ENCODE measurements at regions of chr9 and their contacts with region 1.

Region 1: DNA sequence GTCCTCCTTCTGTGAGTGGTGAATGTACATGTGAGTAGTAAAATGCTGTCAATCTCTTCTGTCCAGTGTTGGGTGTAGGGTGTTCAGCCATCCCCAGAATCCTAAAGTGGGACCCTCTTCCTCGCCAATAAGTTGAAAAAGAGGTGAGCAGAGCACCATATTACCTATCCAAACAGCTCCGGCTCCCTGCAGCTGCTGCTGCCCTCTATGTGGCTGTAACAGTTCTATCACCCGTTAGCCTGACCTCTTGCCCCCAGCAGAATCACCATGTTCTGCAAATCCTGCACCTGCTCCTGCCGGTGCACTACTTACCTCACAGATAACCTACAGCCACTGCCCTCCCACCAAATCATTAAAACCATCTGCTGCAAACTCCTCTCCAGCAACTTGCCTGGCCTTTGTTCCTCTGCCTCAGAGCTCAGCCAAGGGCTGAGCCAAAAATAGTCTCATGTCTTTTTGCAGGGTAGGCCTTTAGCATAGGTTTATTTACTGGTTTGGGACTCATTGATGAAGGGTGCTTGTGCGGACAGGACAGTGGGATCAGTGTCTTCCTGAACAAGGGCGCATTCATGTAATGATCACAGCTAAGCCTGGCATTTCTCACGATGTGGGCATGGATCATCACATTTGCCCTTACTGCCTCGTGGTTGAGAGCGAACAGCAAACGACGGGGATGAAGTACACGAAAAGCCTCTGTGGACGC is 49.6 kb upstream of the CCL21 start:
- DNase-seq: no peak
- ATAC-seq: no peak
- H3K4me3 ChIP-seq: no peak overlapping the region
- H3K27ac ChIP-seq: no peak overlapping the region
- H3K4me1 ChIP-seq: peaks cover 0 to 5% of the 10 kb centered on the region in 2 experiments; a peak in 1 of 4 replicates
- H3K27me3 ChIP-seq: no peaks in the 10 kb centered on the region
- CTCF ChIP-seq: no peak
- POLR2A ChIP-seq: no peak
- RAD21 ChIP-seq: no peak

Region 2: GRCh38 chr9:34744295-34745221 is 15.0 kb before region 1 on chr9:
- CTCF ChIA-PET with region 1: interaction called, 16 read pairs
- POLR2A ChIA-PET with region 1: interaction called, 4 read pairs
- RAD21 ChIA-PET with region 1: interaction called in 1 of 2 experiments, 5 read pairs
- intact Hi-C with region 1: no loop called
- DNase-seq: peak; percentile 35
- ATAC-seq: peak; percentile 91
- H3K4me3 ChIP-seq: 0 out of 4 replicates have a peak overlapping the region, but pooled peaks of 1 of the 2 experiments have one; percentile 11
- H3K27ac ChIP-seq: no peak overlapping the region
- H3K4me1 ChIP-seq: peaks cover 12 to 19% of the 10 kb centered on the region in 2 experiments
- H3K27me3 ChIP-seq: no peaks in the 10 kb centered on the region
- CTCF ChIP-seq: no peak
- POLR2A ChIP-seq: no peak
- RAD21 ChIP-seq: no peak

Region 3: DNA sequence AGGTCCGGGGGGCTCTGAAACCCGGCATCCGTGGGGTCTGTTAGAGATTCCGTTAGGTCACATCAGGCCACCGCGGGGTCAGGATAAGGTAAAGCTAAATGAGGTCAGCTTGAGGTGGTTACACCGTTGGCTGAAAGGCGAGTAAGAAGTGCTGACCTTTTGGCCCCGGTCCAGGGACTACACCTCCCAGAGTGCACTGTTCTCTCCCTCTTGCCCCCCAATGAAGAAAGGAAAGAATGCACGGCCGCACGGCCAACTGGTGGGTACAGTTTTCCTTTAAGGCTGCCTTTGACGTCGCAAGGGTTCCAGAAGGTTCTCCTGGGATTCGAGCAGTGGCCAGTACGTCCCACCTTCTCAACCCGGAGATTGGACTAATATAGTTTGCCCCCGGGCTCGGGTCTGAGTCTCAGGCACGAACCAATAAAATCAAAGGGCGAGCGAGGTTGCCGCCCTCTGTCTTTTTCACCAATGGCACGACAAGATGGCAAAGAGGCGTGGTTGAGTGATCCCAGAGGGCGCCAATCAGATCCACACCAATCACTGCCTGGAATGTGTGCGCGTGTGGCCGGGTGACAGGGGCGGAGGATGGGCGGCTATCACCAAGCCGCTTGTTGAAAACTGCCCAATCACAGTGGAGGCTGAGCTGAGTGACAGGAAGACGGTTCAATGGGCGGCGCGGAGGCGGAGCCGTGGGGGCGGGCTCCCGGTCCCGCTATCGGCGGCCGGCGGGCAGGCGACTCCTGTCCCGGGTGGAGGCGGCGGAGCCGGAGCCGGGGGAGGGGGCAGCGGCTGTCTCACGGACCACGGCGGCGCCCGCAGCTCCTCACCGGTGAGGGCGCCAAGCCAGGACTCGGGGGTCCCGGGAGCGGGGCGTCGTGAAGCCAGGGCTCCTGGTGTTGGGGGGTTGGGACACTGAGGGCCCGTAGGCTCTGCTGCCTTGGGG is 229.7 kb after region 1 on chr9 and contains the start of gene DNAJB5:
- CTCF ChIA-PET with region 1: interaction called, 16 read pairs
- POLR2A ChIA-PET with region 1: no interaction called
- RAD21 ChIA-PET with region 1: interaction called, 5 read pairs
- intact Hi-C with region 1: loop called (anchors 2 kb)
- DNase-seq: peak; percentile 99
- ATAC-seq: peak; percentile 93
- H3K4me3 ChIP-seq: peak within 1 kb of the TSS; percentile 64 to 73
- H3K27ac ChIP-seq: no peak within 1 kb of the TSS; the same call in 1 of the 2 replicates
- H3K4me1 ChIP-seq: peaks cover 21 to 56% of the 10 kb centered on the region in 2 experiments
- H3K27me3 ChIP-seq: no peaks in the 10 kb centered on the region
- CTCF ChIP-seq: no peak
- POLR2A ChIP-seq: peak; percentile 24
- RAD21 ChIP-seq: no peak
- total RNA-seq, gene DNAJB5: 3.6 TPM

Region 4: GRCh38 chr9:35051069-35051967 is 291.7 kb after region 1 on chr9:
- CTCF ChIA-PET with region 1: interaction called, 28 read pairs
- POLR2A ChIA-PET with region 1: no interaction called
- RAD21 ChIA-PET with region 1: interaction called, 4 read pairs
- intact Hi-C with region 1: loop called (anchors 5 kb)
- DNase-seq: peak; percentile 27
- ATAC-seq: peak; percentile 80
- H3K4me3 ChIP-seq: no peak overlapping the region
- H3K27ac ChIP-seq: no peak overlapping the region
- H3K4me1 ChIP-seq: no peaks in the 10 kb centered on the region
- H3K27me3 ChIP-seq: no peaks in the 10 kb centered on the region
- CTCF ChIP-seq: peak; percentile 43 to 73 (median 71); a peak in 5 of 6 replicates
- POLR2A ChIP-seq: no peak
- RAD21 ChIP-seq: peak; percentile 47; the same call in 1 of the 2 replicates

Region 5: GRCh38 chr9:35481347-35481975 is 721.9 kb after region 1 on chr9:
- CTCF ChIA-PET with region 1: interaction called, 4 read pairs
- POLR2A ChIA-PET with region 1: no interaction called
- RAD21 ChIA-PET with region 1: no interaction called
- intact Hi-C with region 1: loop called (anchors 1 kb)
- DNase-seq: peak; percentile 54
- ATAC-seq: peak; percentile 64
- H3K4me3 ChIP-seq: no peak overlapping the region
- H3K27ac ChIP-seq: no peak overlapping the region
- H3K4me1 ChIP-seq: no peaks in the 10 kb centered on the region
- H3K27me3 ChIP-seq: no peaks in the 10 kb centered on the region
- CTCF ChIP-seq: peak; percentile 78 to 93 (median 87)
- POLR2A ChIP-seq: no peak
- RAD21 ChIP-seq: peak; percentile 94

Measured in HCT116 (cell line).